H1 (cell line): ENCODE measurements at regions of chr14 and their contacts with region 1.

Region 1: DNA sequence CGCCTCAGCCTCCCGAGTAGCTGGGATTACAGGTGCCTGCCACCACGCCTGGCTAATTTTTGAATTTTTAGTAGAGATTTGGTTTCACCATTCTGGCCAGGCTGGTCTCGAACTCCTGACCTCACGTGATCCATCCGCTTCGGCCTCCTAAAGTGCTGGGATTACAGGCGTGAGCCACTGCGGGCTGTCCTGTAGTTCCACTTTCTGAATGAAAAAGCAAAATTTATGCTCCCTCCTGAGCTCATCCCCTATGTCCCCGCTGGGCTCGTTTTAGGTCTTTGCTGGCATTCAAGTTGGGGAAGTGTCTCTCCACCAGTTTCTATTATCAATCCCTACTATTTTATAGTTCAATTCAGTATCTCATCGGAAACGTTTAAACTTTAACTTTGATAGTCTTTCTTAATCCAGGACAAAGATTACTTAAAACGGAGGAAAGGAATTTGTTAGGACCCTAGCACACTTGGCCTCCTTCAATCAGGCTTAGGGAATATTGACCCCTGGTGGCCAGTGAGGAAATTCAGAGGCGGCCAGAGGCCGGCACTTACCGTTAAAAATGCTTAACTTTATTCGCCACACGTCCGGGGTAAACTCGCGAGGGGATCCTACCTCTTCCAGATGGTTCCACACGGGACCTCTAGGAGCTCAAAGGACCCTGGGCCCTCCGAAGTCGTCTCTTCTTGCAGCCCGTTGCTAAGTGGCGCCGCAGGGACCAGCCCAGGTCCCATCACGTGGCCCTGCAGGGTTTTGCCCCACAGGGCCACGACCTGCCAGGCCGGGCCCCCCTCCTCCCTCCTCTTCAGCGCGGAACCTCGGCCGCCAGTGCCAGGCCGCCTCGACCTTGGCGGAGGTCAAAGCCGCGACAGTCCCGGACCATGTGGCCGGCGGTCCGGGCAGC is 11.4 kb upstream of the DNAL1 start:
- DNase-seq: peak in 1 of 2 experiments; percentile 82
- H3K4me3 ChIP-seq: peak overlapping the region; percentile 31 to 65 (median 58)
- H3K27ac ChIP-seq: no peak overlapping the region; the same call in 1 of the 2 replicates
- H3K4me1 ChIP-seq: peaks cover 0 to 5% (median 1%) of the 10 kb centered on the region in 4 experiments; a peak in 4 of 7 replicates
- H3K27me3 ChIP-seq: no peaks in the 10 kb centered on the region
- CTCF ChIP-seq: peak; percentile 64 to 82 (median 80)
- EP300 ChIP-seq: no peak
- POLR2A ChIP-seq: no peak
- RAD21 ChIP-seq: peak; percentile 81 to 84

Region 2: DNA sequence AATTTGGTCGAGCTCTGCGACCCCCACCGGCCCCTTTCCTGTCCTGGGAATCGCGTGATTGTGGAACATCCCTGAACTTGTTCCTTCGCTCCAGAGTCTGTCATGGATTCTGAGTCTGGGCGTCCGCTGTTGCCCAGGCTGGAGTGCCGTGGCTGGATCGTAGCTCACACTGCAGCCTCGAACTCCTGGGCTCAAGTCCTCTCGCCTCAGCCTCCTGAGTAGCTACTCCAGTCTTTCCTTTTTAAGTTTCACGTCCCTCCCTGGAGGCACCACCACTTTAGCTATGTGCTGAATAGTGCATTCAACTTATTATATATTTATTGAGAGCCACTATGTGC is 20.3 kb before region 1 on chr14:
- CTCF ChIA-PET with region 1: interaction called, 11 read pairs
- POLR2A ChIA-PET with region 1: interaction called, 7 read pairs
- DNase-seq: no peak
- H3K4me3 ChIP-seq: peak overlapping the region; percentile 51 to 75 (median 70)
- H3K27ac ChIP-seq: no peak overlapping the region
- H3K4me1 ChIP-seq: peaks cover 0 to 5% (median 0%) of the 10 kb centered on the region in 4 experiments; a peak in 1 of 7 replicates
- H3K27me3 ChIP-seq: peaks cover 0 to 32% (median 12%) of the 10 kb centered on the region in 4 experiments; a peak in 5 of 7 replicates
- CTCF ChIP-seq: no peak
- EP300 ChIP-seq: no peak
- POLR2A ChIP-seq: no peak
- RAD21 ChIP-seq: no peak

Region 3: GRCh38 chr14:73675037-73675436 is 41.7 kb after region 1 on chr14:
- CTCF ChIA-PET with region 1: no interaction called
- POLR2A ChIA-PET with region 1: no interaction called
- DNase-seq: no peak
- H3K4me3 ChIP-seq: no peak overlapping the region
- H3K27ac ChIP-seq: no peak overlapping the region
- H3K4me1 ChIP-seq: no peaks in the 10 kb centered on the region
- H3K27me3 ChIP-seq: no peaks in the 10 kb centered on the region
- CTCF ChIP-seq: no peak
- EP300 ChIP-seq: no peak
- POLR2A ChIP-seq: no peak
- RAD21 ChIP-seq: no peak

Region 4: DNA sequence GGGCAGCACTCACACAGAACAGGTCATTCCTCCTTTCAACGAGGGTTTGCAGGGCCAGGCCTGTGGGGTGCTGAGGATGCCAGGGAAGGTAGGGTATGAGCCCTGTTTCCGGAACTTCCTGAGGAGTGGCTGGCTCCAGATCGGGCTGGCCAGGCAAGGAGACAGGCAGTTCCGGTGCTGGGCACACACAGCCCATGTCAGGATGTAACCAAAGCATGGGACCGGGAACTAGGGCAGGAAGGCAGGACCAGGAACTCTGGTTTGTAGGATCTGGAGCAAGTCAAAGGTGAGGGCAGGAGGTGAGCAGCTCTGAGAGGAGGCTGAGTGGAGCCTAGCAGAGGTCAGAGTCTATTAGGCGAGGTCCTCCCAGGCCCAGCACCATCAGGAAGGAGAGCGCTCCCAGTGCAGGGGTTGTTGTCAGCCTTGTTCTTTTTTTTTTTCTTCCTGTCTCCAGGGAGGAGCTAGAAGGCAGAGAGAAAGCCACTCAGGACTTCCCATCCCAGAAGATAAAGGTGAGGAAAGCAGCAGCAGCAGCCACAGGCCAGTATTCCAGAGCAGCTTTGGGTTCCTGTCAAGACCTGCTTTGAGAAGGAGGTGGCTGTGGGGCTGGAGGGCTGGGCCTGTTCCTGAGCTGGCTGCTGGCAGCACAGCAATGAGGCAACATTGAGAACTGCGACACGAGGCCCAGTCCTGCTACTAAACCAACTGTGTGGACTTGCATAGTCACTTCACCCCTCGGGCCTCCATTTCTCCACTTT is 169.2 kb after region 1 on chr14:
- CTCF ChIA-PET with region 1: no interaction called
- POLR2A ChIA-PET with region 1: no interaction called
- DNase-seq: no peak
- H3K4me3 ChIP-seq: no peak overlapping the region
- H3K27ac ChIP-seq: no peak overlapping the region
- H3K4me1 ChIP-seq: no peaks in the 10 kb centered on the region
- H3K27me3 ChIP-seq: no peaks in the 10 kb centered on the region
- CTCF ChIP-seq: no peak
- EP300 ChIP-seq: no peak
- POLR2A ChIP-seq: no peak
- RAD21 ChIP-seq: no peak